ENCODE measurements at regions of chr22 and their contacts with region 1.

Region 1: GRCh38 chr22:31943976-31944699 is at the start of gene YWHAH:
- DNase-seq: peak; percentile 69 to 96 (median 79)
- ATAC-seq: peak; percentile 82
- H3K4me3 ChIP-seq: peak within 1 kb of the TSS; percentile 87
- H3K4me3 Mint-ChIP-seq: peak within 1 kb of the TSS in 6 of 10 donors; percentile 89 to 94 (median 92)
- H3K27ac ChIP-seq: peak within 1 kb of the TSS; percentile 76
- H3K27ac Mint-ChIP-seq: peak within 1 kb of the TSS in 8 of 9 donors; percentile 74 to 95 (median 85)
- H3K4me1 ChIP-seq: peaks cover 18 to 21% of the 10 kb centered on the region in 2 donors
- H3K4me1 Mint-ChIP-seq: peaks cover 7 to 30% (median 14%) of the 10 kb centered on the region in 7 donors
- H3K27me3 ChIP-seq: no peaks in the 10 kb centered on the region
- H3K27me3 Mint-ChIP-seq: no peaks in the 10 kb centered on the region
- total RNA-seq, gene YWHAH: 11.7 to 130 (median 17.1) TPM

Region 2: GRCh38 chr22:31496007-31496734 is 448.0 kb before region 1 on chr22 and contains the start of gene SFI1:
- CTCF ChIA-PET with region 1: no interaction called
- POLR2A ChIA-PET with region 1: no interaction called
- intact Hi-C with region 1: loop called (anchors 2 kb)
- DNase-seq: peak; percentile 91 to 98 (median 96)
- ATAC-seq: peak; percentile 93
- H3K4me3 ChIP-seq: peak within 1 kb of the TSS; percentile 83
- H3K4me3 Mint-ChIP-seq: peak within 1 kb of the TSS; percentile 85 to 99 (median 96)
- H3K27ac ChIP-seq: peak within 1 kb of the TSS; percentile 92
- H3K27ac Mint-ChIP-seq: peak within 1 kb of the TSS; percentile 92 to 99 (median 98)
- H3K4me1 ChIP-seq: peaks cover 18 to 20% of the 10 kb centered on the region in 2 donors
- H3K4me1 Mint-ChIP-seq: peaks cover 7 to 50% (median 43%) of the 10 kb centered on the region in 7 donors
- H3K27me3 ChIP-seq: no peaks in the 10 kb centered on the region
- H3K27me3 Mint-ChIP-seq: no peaks in the 10 kb centered on the region
- total RNA-seq, gene SFI1: 196 to 359 (median 343) TPM

Region 3: DNA sequence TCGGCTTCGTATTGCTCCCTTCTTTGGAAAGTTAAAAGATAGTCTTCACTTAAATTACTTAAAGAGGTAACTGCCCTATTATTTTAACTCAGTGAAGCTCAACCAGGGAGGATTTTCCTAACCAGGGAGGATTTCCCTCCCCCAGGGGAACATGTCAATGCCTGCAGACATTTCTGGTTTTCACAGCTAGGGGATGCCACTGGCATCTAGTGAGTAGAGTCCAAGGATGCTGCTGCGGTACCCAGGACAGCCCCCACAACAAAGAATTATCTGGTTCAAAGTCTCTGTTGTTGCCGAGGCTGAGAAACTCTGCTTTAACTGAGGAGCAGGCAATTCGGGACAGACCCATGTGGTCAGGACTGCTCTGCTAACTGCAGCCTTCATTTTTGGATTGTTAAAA is 108.1 kb before region 1 on chr22:
- CTCF ChIA-PET with region 1: no interaction called
- POLR2A ChIA-PET with region 1: no interaction called
- intact Hi-C with region 1: loop called (anchors 5 to 10 kb)
- DNase-seq: no peak
- ATAC-seq: no peak
- H3K4me3 ChIP-seq: no peak overlapping the region
- H3K4me3 Mint-ChIP-seq: no peak overlapping the region
- H3K27ac ChIP-seq: no peak overlapping the region
- H3K27ac Mint-ChIP-seq: no peak overlapping the region
- H3K4me1 ChIP-seq: no peaks in the 10 kb centered on the region
- H3K4me1 Mint-ChIP-seq: peaks cover 0 to 10% (median 0%) of the 10 kb centered on the region in 7 donors
- H3K27me3 ChIP-seq: no peaks in the 10 kb centered on the region
- H3K27me3 Mint-ChIP-seq: no peaks in the 10 kb centered on the region

Region 4: GRCh38 chr22:31911565-31912406 is 32.4 kb before region 1 on chr22:
- CTCF ChIA-PET with region 1: interaction called, 3 read pairs
- POLR2A ChIA-PET with region 1: no interaction called
- intact Hi-C with region 1: loop called in 1 of 2 experiments (anchors 5 kb)
- DNase-seq: no peak
- ATAC-seq: no peak
- H3K4me3 ChIP-seq: no peak overlapping the region
- H3K4me3 Mint-ChIP-seq: no peak overlapping the region
- H3K27ac ChIP-seq: no peak overlapping the region
- H3K27ac Mint-ChIP-seq: no peak overlapping the region
- H3K4me1 ChIP-seq: no peaks in the 10 kb centered on the region
- H3K4me1 Mint-ChIP-seq: peaks cover 0 to 3% (median 0%) of the 10 kb centered on the region in 7 donors
- H3K27me3 ChIP-seq: no peaks in the 10 kb centered on the region
- H3K27me3 Mint-ChIP-seq: no peaks in the 10 kb centered on the region

Region 5: GRCh38 chr22:31970490-31971444 is 26.6 kb after region 1 on chr22:
- CTCF ChIA-PET with region 1: interaction called, 7 read pairs
- POLR2A ChIA-PET with region 1: no interaction called
- intact Hi-C with region 1: loop called (anchors 1 to 2 kb)
- DNase-seq: peak; percentile 69 to 97 (median 86)
- ATAC-seq: peak; percentile 99
- H3K4me3 ChIP-seq: peak overlapping the region; percentile 70
- H3K4me3 Mint-ChIP-seq: peak overlapping the region; percentile 72 to 87 (median 82)
- H3K27ac ChIP-seq: peak overlapping the region; percentile 37
- H3K27ac Mint-ChIP-seq: peak overlapping the region in 7 of 9 donors; percentile 19 to 75 (median 62)
- H3K4me1 ChIP-seq: peaks cover 8 to 10% of the 10 kb centered on the region in 2 donors
- H3K4me1 Mint-ChIP-seq: peaks cover 9 to 18% (median 13%) of the 10 kb centered on the region in 7 donors
- H3K27me3 ChIP-seq: no peaks in the 10 kb centered on the region
- H3K27me3 Mint-ChIP-seq: peaks cover 0 to 2% (median 0%) of the 10 kb centered on the region in 5 donors

Measured in naive thymus-derived CD4-positive, alpha-beta T cell (primary cell).